Activated T-helper 2 cell treated with anti-CD3 and anti-CD28 coated beads, Interferon-gamma antibody, Interleukin-2, Interleukin-4, amounts not matched to agents 10 μg/mL and 5 μg/mL and 100 μg/mL, durations not matched to agents 14 hours and 24 hours and 36 hours (primary cell): ENCODE measurements at regions of chr6 and their contacts with region 1.

Region 1: DNA sequence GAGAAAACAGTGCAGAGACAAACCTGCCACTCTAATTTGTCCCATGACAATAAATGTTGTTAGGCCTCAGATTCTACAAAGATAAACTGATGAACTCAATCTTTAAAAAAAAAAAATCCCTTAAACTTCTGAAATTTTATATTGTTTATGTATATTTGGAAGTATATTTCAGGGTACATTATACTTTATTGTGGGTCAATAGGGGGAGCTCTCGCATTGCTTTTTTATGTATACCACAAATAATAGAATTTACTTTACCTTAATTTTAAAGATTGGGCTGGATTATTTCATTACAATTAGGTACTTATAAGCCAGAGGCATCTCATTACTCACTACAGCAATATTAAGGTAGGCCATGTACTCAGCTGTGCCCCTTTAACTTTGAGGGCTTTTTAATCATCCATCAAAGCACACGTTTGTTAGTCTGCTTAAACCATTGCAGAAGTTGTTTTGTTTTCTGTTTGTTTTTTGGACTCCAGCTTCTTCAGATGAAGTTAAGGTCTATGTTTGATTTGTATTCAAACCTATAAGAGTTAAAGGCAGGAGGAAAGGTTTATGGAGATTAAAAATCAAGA is 56.3 kb upstream of the EYA4 start:
- DNase-seq: no peak
- H3K4me3 Mint-ChIP-seq: no peak overlapping the region
- H3K27ac Mint-ChIP-seq: no peak overlapping the region
- H3K4me1 Mint-ChIP-seq: no peaks in the 10 kb centered on the region
- H3K27me3 Mint-ChIP-seq: no peaks in the 10 kb centered on the region

Region 2: DNA sequence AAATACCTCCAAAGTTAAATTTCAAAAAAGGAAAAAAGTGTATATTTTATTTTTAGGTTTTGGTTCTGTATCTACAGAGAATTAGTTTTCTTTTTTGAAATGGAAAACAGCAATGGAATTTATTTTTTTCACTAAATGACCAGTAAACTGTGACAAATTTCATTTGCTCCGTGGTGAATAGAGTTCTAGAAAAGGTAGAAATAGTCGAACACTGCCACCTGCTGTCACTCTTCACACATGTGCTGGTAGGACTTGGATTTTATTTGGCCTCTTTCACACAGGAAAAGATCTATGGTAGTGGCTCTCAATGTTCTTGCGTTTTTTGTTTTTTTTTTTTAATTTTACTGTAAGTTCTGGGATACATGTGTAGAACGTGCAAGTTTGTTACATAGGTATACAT is 368.8 kb after region 1 on chr6:
- intact Hi-C with region 1: loop called (anchors 5 kb)
- DNase-seq: no peak
- H3K4me3 Mint-ChIP-seq: no peak overlapping the region
- H3K27ac Mint-ChIP-seq: no peak overlapping the region
- H3K4me1 Mint-ChIP-seq: no peaks in the 10 kb centered on the region
- H3K27me3 Mint-ChIP-seq: no peaks in the 10 kb centered on the region

Region 3: DNA sequence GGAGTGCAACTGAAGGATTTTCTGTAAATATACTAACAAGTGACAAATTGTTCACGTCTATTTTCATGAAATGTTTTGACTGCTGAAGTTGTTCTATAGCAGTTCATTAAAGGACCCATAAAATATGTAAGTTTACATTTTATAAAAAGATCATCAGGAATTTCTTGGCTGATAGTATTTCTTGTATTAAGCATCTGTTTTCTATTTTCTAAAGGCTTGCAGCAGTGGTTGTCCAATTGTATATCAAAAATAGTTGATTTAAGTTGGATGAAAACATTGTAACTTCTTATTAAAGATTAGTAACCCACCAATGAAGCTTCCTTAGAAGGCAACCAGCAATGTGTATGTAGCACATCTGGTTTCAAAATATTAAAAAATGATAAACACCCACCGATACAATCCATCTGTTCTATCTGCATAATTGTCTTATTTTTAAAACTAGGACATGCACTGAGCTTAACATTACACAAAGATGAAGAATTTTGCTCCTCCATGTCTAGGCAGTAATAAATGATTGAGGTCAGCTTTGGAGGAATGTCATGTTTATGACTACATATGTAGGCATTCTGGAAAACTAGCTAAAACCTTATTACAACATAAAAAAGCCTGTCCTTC is 402.8 kb after region 1 on chr6:
- intact Hi-C with region 1: no loop called
- DNase-seq: no peak
- H3K4me3 Mint-ChIP-seq: no peak overlapping the region
- H3K27ac Mint-ChIP-seq: no peak overlapping the region
- H3K4me1 Mint-ChIP-seq: no peaks in the 10 kb centered on the region
- H3K27me3 Mint-ChIP-seq: peaks cover 2% of the 10 kb centered on the region